Uterus (tissue), 4 donors: ENCODE measurements at regions of chr12 and their contacts with region 1.

Region 1: DNA sequence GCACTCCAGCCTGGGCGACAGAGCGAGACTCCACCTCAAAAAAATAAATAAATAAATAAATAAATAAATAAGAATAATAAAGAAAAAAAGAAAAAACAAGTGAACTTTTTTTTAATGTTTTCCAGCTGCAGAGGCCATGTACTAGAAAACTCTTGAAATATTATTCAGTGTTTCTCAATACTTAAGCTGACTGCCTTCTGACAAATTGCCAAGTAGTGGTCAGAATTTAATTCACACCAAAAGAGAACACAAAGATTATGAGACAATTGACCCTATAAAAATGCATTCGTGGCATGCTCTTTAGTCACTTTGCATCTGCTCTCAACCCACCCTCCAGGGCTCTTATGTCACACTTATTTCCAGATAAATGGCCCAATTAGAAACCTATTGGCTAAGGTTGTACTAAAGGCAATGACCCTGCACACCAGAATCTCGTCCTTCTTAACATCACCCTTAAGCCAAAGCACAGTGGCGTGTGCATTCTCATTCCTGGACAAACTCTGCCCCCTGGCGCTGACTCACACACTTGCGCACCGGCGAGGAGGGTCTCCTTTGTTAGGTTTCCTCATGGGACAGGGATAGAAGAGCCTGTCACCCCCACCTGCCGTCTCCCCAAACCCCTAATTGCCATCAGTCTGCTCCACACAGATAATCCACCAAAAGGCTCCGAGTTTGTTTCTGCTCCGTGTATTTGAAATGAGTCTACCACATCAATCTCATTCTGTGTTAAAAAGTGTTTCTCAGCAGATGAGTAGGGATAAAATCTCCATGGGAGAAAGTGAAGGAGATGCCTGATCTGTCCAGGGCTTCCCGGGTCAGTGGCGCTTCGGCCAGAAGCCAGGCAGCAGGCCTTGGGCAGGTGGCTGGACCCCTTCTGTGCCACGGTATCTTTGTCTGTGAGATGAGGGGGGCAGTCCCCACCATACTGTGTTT is 73.1 kb upstream of the CEP83 start:
- DNase-seq: peak; percentile 66 to 76
- H3K4me3 ChIP-seq: no peak overlapping the region
- H3K27ac ChIP-seq: no peak overlapping the region
- H3K4me1 ChIP-seq: no peaks in the 10 kb centered on the region
- H3K27me3 ChIP-seq: no peaks in the 10 kb centered on the region
- CTCF ChIP-seq: peak; percentile 72 to 86 (median 81)
- POLR2A ChIP-seq: no peak

Region 2: GRCh38 chr12:94139816-94140215 is 392.9 kb before region 1 on chr12:
- intact Hi-C with region 1: loop called (anchors 5 kb)
- DNase-seq: no peak
- H3K4me3 ChIP-seq: no peak overlapping the region
- H3K27ac ChIP-seq: no peak overlapping the region
- H3K4me1 ChIP-seq: no peaks in the 10 kb centered on the region
- H3K27me3 ChIP-seq: no peaks in the 10 kb centered on the region
- CTCF ChIP-seq: no peak
- POLR2A ChIP-seq: no peak

Region 3: GRCh38 chr12:94149119-94149780 is 383.5 kb before region 1 on chr12:
- intact Hi-C with region 1: loop called (anchors 5 kb)
- DNase-seq: peak in 1 of 2 donors; percentile 35
- H3K4me3 ChIP-seq: peak overlapping the region; percentile 27 to 67
- H3K27ac ChIP-seq: peak overlapping the region in 1 of 2 donors; percentile 59
- H3K4me1 ChIP-seq: no peaks in the 10 kb centered on the region
- H3K27me3 ChIP-seq: no peaks in the 10 kb centered on the region
- CTCF ChIP-seq: peak in 1 of 4 experiments; percentile 4
- POLR2A ChIP-seq: no peak

Region 4: DNA sequence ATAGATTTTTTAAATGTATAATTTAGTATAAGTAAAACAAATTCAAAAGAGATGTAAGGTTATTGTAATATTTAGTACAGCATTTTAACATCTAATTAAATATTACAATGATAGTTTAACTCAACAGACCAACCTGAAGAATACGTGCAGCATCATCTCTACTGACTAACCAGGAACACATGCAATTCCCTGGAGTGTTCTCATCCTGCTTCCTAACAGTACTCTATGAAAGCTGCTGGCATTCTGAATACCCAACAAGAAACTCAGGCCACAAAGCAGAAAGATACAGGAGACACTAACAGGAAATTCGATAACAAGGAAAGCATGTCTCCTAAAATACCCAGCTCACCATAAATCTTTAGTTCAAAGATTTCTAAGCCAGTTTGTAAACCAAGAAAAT is 131.4 kb before region 1 on chr12:
- intact Hi-C with region 1: no loop called
- DNase-seq: no peak
- H3K4me3 ChIP-seq: no peak overlapping the region
- H3K27ac ChIP-seq: no peak overlapping the region
- H3K4me1 ChIP-seq: no peaks in the 10 kb centered on the region
- H3K27me3 ChIP-seq: no peaks in the 10 kb centered on the region
- CTCF ChIP-seq: no peak
- POLR2A ChIP-seq: no peak